ENCODE measurements at regions of chr3 and their contacts with region 1.

Region 1: GRCh38 chr3:36957862-36958686 is 13.2 kb upstream of the TRANK1 start:
- DNase-seq: no peak
- H3K4me3 Mint-ChIP-seq: no peak overlapping the region
- H3K27ac Mint-ChIP-seq: no peak overlapping the region
- H3K4me1 Mint-ChIP-seq: peaks cover 7% of the 10 kb centered on the region
- H3K27me3 Mint-ChIP-seq: no peaks in the 10 kb centered on the region

Region 2: DNA sequence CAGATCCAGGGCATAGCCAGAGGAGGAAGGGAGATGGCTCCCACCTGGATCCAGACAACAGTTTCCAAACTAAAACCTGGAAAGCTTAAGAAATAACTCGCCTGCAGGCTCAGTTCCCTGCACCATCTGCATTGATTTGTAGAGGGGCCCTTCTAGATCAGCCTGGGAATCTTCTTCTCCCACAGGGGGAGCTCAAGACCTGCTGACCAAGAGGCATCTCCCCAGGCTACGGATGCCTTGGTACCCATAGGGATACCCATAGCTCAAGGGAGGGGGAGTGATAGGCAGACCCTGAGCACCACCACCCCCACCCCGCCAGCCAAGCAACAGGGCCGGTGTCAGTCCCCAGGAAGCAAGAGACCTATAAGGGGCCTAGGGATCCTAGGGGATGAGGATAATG is 165.7 kb before region 1 on chr3:
- CTCF ChIA-PET with region 1: interaction called, 13 read pairs
- POLR2A ChIA-PET with region 1: no interaction called
- DNase-seq: peak; percentile 18
- H3K4me3 Mint-ChIP-seq: no peak overlapping the region
- H3K27ac Mint-ChIP-seq: no peak overlapping the region
- H3K4me1 Mint-ChIP-seq: no peaks in the 10 kb centered on the region
- H3K27me3 Mint-ChIP-seq: peaks cover 21% of the 10 kb centered on the region

Region 3: DNA sequence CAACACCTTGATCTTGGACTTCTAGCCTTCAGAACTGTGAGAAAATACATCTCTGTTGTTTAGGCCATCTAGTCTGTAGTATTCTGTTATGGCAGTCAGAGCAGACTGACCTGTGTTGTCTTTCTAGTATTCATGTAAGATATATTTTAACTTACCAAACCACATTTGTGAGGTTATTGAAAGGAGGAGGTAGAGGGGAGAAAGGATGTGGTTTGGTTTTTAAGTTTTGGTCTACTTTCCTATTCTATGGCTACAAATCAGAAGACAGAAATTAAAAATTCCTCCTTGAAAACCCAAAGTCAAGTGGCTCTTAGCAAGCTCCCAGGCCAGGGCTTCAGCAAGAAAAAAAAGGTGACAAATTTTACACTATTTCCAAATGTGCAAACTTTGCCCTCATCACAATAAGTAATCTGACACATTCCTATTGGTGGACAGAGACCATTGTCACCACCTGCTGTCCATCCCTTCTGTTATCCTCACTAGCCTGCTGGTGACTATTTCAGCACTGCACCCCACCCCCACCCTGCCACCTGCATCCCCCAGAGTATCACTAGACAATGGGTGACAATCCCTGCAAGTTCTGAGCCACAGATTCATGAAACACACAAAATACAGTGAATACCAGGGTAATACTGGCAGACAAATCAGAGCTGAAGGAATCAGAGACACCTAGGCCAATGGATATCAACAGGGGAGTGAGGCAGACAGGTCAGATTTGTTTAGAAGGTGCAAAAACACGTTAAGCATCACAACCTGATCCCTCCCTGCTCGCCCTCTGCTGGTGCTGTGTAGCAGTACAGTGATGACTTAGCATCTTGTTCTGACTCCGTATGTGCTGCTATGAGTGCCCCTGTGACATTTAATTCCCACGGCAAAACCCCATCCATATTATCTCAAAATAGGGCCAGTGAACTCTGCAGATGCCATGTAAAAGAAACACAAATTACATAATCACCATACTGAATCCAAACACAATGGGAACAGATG is 114.7 kb before region 1 on chr3:
- CTCF ChIA-PET with region 1: interaction called, 11 read pairs
- POLR2A ChIA-PET with region 1: no interaction called
- DNase-seq: peak; percentile 70
- H3K4me3 Mint-ChIP-seq: no peak overlapping the region
- H3K27ac Mint-ChIP-seq: no peak overlapping the region
- H3K4me1 Mint-ChIP-seq: peaks cover 27% of the 10 kb centered on the region
- H3K27me3 Mint-ChIP-seq: no peaks in the 10 kb centered on the region

Region 4: GRCh38 chr3:36876181-36876936 is 81.7 kb before region 1 on chr3:
- CTCF ChIA-PET with region 1: interaction called, 18 read pairs
- POLR2A ChIA-PET with region 1: interaction called, 5 read pairs
- DNase-seq: peak; percentile 38
- H3K4me3 Mint-ChIP-seq: peak overlapping the region; percentile 60
- H3K27ac Mint-ChIP-seq: peak overlapping the region; percentile 86
- H3K4me1 Mint-ChIP-seq: peaks cover 25% of the 10 kb centered on the region
- H3K27me3 Mint-ChIP-seq: peaks cover 5% of the 10 kb centered on the region

Region 5: DNA sequence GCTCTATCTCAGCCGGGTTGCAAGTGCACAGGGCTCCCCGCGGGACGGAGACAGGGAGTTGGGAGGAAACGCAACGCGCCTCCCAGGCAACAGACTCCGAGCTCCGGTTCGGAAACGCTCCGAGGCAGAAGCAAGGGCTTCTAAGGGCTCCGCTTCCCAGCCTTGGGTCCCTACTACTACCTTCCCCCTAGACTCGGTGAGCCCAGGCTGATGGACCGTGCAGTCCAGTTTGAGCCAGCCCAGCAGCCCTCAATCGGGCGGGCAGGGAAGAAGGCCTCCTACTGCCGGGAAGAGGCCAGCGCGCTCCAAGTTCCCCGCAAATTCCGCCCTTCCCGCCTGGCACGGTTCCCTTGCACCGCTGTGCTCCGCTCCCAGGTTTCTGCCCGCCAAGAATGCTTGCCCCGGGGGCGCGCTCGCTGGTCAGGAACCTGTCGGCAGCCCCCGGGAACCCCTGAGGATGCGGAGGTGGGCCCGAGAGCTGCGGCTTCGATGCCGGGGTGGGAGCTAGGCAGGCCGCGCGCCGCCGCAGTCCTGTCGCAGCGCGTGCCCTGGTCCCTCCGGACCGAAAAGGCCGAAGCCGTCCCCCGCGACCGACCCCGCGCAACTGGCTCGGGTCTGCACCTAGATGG is 13.9 kb before region 1 on chr3:
- CTCF ChIA-PET with region 1: interaction called, 15 read pairs
- POLR2A ChIA-PET with region 1: interaction called, 9 read pairs
- DNase-seq: peak; percentile 30
- H3K4me3 Mint-ChIP-seq: peak overlapping the region; percentile 74
- H3K27ac Mint-ChIP-seq: no peak overlapping the region
- H3K4me1 Mint-ChIP-seq: peaks cover 9% of the 10 kb centered on the region
- H3K27me3 Mint-ChIP-seq: peaks cover 4% of the 10 kb centered on the region

Region 6: DNA sequence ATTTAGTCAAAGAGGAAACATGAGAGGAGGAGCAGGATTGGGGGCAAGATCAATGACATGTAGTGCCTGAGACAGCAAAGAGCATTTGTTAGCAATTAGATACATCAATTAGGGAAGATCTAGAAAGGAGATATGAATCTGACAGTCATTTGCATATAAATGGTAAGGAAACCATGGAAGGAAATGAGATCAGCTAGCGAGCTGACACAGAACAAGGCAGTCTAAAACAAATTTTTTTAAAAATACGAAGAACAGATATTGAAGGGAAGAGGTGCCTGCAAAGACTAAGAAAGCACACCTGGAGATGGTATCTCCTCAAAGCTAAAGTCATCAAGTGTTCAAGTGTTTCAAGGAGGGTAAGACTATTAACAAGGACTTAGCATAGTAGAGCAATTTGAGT is 30.3 kb after region 1 on chr3:
- CTCF ChIA-PET with region 1: interaction called, 18 read pairs
- POLR2A ChIA-PET with region 1: interaction called, 10 read pairs
- DNase-seq: no peak
- H3K4me3 Mint-ChIP-seq: peak overlapping the region; percentile 62
- H3K27ac Mint-ChIP-seq: peak overlapping the region; percentile 40
- H3K4me1 Mint-ChIP-seq: peaks cover 36% of the 10 kb centered on the region
- H3K27me3 Mint-ChIP-seq: no peaks in the 10 kb centered on the region

Measured in activated CD4-positive, alpha-beta memory T cell treated with anti-CD3 and anti-CD28 coated beads, Interleukin-2, amount 10 ng/mL, durations not matched to agents 7 days and 5 days (primary cell).